ENCODE measurements at regions of chr2 and their contacts with region 1.

Region 1: GRCh38 chr2:61764035-61764800 is 89.6 kb downstream of the FAM161A start:
- DNase-seq: peak; percentile 96 to 99
- ATAC-seq: peak; percentile 91 to 94
- H3K4me3 ChIP-seq: peak overlapping the region; percentile 61 to 81 (median 74)
- H3K27ac ChIP-seq: peak overlapping the region; percentile 90 to 99 (median 98)
- H3K4me1 ChIP-seq: peaks cover 7 to 16% of the 10 kb centered on the region in 2 donors
- H3K27me3 ChIP-seq: no peaks in the 10 kb centered on the region
- CTCF ChIP-seq: peak in 2 of 5 experiments; percentile 3 to 5
- POLR2A ChIP-seq: peak; percentile 88 to 97

Region 2: DNA sequence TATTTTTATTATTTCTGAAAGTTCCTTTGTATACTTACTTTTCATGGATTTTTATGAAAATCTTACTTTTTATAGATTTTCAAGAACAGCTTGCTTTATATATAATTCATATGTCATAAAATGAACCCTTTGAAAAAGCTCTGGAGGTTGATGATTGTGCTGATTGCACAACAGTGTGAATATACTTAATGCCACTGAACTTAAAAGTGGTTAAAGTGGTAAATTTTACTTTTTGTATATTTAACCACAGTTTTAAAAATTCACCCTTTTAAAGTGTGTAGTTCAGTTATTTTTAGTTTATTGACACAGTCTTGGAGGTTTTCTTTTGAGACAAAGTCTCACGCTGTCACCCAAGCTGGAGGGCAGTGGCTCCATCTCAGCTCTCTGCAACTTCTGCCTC is 690.1 kb before region 1 on chr2:
- in situ Hi-C with region 1: no loop called
- intact Hi-C with region 1: no loop called
- DNase-seq: no peak
- ATAC-seq: no peak
- H3K4me3 ChIP-seq: no peak overlapping the region
- H3K27ac ChIP-seq: no peak overlapping the region
- H3K4me1 ChIP-seq: no peaks in the 10 kb centered on the region
- H3K27me3 ChIP-seq: no peaks in the 10 kb centered on the region
- CTCF ChIP-seq: no peak
- POLR2A ChIP-seq: no peak

Region 3: DNA sequence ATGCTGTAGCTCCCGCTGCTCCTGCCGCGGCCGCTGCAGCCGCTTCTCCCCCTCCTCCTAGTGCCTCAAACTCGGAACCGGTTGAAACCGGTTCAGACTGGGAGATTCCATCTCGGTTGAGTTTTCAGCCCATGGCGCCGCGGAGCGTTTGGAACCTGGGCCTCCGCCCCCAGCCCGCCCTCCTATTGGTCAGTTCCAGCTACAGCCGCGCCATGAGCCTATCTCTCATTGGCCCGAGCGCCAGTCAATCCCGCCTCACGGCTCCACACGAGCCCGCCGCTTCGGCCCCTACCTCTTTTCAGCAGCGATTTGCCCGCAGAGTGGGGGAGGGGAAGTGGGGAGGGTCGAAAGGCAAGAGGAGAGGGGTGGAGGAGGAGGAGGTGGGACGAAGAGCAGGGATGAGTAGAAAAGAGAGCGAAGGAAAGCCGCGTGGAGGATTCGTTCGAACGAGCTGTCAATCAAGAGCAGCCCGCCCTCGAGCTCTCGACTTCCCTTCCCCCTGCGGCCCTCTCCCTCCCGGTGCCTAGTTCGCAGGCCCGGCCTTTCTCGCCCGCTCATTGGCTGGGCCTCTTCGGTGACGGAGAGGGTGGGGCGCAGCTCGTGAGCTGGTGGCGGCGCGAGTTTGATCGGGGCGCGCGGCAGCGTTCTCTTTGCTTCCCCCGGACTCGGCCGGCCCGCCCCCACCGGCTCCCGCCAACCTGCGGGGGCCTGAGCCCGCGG is 225.9 kb before region 1 on chr2 and contains the start of gene XPO1:
- in situ Hi-C with region 1: loop called (anchors 10 to 25 kb)
- intact Hi-C with region 1: loop called (anchors 1 kb)
- DNase-seq: peak; percentile 99
- ATAC-seq: peak; percentile 80 to 82
- H3K4me3 ChIP-seq: peak within 1 kb of the TSS; percentile 73 to 94 (median 82)
- H3K27ac ChIP-seq: peak within 1 kb of the TSS; percentile 97 to 99 (median 99)
- H3K4me1 ChIP-seq: peaks cover 29 to 30% of the 10 kb centered on the region in 2 donors
- H3K27me3 ChIP-seq: no peaks in the 10 kb centered on the region
- CTCF ChIP-seq: peak in 2 of 5 experiments; percentile 6 to 10
- POLR2A ChIP-seq: peak; percentile 90 to 91
- total RNA-seq, gene XPO1: 34.3 to 69.1 (median 56.3) TPM

Region 4: GRCh38 chr2:61694312-61695274 is 69.6 kb before region 1 on chr2:
- in situ Hi-C with region 1: no loop called
- intact Hi-C with region 1: loop called (anchors 2 kb)
- DNase-seq: peak; percentile 93 to 94
- ATAC-seq: peak; percentile 90 to 91
- H3K4me3 ChIP-seq: peak overlapping the region; percentile 86 to 99 (median 94)
- H3K27ac ChIP-seq: peak overlapping the region; percentile 95 to 99 (median 97)
- H3K4me1 ChIP-seq: peaks cover 10 to 11% of the 10 kb centered on the region in 2 donors
- H3K27me3 ChIP-seq: no peaks in the 10 kb centered on the region
- CTCF ChIP-seq: peak; percentile 50 to 75 (median 61)
- POLR2A ChIP-seq: peak; percentile 43 to 68

Region 5: DNA sequence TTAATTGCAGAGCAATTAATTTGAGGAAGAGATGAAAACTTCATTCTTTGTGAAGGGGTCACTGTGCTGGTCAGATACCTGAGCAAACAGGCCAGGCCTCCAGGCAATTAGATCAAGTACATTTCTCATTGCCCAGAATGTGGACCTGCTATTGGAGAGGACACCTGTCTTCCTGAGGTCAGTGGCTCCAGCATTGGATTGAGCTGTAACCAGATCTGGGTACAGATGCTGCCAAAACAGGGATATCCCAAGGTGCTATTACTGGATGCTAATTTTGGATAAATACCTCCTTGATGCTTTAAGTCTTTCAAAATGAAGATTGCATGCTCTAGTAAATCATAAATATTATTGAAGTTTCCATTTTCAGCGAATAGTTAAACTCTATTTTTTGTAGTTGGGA is 41.9 kb before region 1 on chr2:
- in situ Hi-C with region 1: no loop called
- intact Hi-C with region 1: loop called (anchors 2 kb)
- DNase-seq: peak; percentile 54 to 64
- ATAC-seq: peak; percentile 60 to 61
- H3K4me3 ChIP-seq: no peak overlapping the region
- H3K27ac ChIP-seq: peak overlapping the region; percentile 84 to 92 (median 91)
- H3K4me1 ChIP-seq: peaks cover 54 to 57% of the 10 kb centered on the region in 2 donors
- H3K27me3 ChIP-seq: no peaks in the 10 kb centered on the region
- CTCF ChIP-seq: no peak
- POLR2A ChIP-seq: no peak

Region 6: GRCh38 chr2:62195421-62196277 is 431.4 kb after region 1 on chr2 and contains the start of gene B3GNT2:
- in situ Hi-C with region 1: no loop called
- intact Hi-C with region 1: loop called (anchors 10 kb)
- DNase-seq: peak; percentile 54 to 56
- ATAC-seq: peak; percentile 80 to 88
- H3K4me3 ChIP-seq: peak within 1 kb of the TSS; percentile 89 to 100 (median 96)
- H3K27ac ChIP-seq: peak within 1 kb of the TSS; percentile 87 to 88 (median 88)
- H3K4me1 ChIP-seq: peaks cover 16 to 20% of the 10 kb centered on the region in 2 donors
- H3K27me3 ChIP-seq: no peaks in the 10 kb centered on the region
- CTCF ChIP-seq: no peak
- POLR2A ChIP-seq: peak; percentile 79 to 88
- total RNA-seq, gene B3GNT2: 3.6 to 4.8 (median 4.0) TPM

Region 7: DNA sequence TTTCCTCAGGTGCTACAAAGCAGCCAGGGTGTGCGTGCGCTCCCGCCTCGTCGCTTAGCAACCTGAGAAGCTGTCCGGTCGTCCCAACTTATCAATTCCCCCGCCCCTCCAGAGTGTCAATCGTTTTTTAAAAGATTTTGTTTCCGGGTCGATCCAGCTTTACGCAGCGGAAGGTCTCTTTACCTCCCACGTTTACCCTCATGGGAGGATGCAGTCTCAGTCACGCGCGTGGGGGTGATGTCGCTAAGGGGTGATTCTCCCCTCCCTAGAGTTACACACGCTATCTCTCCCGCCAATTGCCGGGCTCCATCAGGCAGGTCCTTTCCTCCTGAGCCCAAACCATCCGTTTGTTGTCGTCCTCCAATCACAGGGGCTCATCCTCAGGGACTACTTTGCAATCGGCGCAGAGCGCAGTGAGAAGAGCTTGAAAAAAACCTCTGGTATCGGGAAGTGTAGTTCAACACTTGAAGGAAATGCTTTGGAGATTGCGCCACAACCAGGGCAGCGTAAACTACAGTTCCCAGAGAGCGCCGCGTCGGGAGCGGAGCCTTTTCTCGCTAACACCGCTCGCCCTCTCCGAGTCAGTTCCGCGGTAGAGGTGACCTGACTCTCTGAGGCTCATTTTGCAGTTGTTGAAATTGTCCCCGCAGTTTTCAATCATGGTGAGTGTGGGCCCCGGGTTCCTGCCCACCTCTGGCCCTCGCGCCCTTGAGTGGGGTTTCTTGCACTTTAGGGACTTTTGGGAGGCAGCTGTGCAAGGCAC is 1824.3 kb after region 1 on chr2 and contains the starts of genes MDH1 and WDPCP:
- in situ Hi-C with region 1: no loop called
- intact Hi-C with region 1: loop called (anchors 10 kb)
- DNase-seq: peak; percentile 93 to 96
- ATAC-seq: peak; percentile 88 to 95
- H3K4me3 ChIP-seq: peak within 1 kb of the TSS; percentile 63 to 93 (median 76)
- H3K27ac ChIP-seq: peak within 1 kb of the TSS; percentile 86 to 92 (median 90)
- H3K4me1 ChIP-seq: peaks cover 54% of the 10 kb centered on the region in 2 donors
- H3K27me3 ChIP-seq: no peaks in the 10 kb centered on the region
- CTCF ChIP-seq: no peak
- POLR2A ChIP-seq: peak; percentile 76 to 87
- total RNA-seq, gene MDH1: 133 to 241 (median 194) TPM
- total RNA-seq, gene WDPCP: 7.2 to 47.3 (median 13.0) TPM

Measured in gastrocnemius medialis (tissue), 4 donors.